CD4-positive, alpha-beta memory T cell (primary cell): ENCODE measurements at regions of chr6 and their contacts with region 1.

Region 1: GRCh38 chr6:158559895-158560835 is at the start of gene TMEM181:
- DNase-seq: peak; percentile 83 to 87 (median 87)
- H3K4me3 ChIP-seq: peak within 1 kb of the TSS; percentile 32 to 71
- H3K4me3 Mint-ChIP-seq: peak within 1 kb of the TSS; percentile 90 to 98 (median 96)
- H3K27ac ChIP-seq: peak within 1 kb of the TSS; percentile 81
- H3K27ac Mint-ChIP-seq: peak within 1 kb of the TSS; percentile 87 to 98 (median 95)
- H3K4me1 ChIP-seq: peaks cover 50% of the 10 kb centered on the region
- H3K4me1 Mint-ChIP-seq: peaks cover 30 to 50% (median 43%) of the 10 kb centered on the region in 4 donors
- H3K27me3 ChIP-seq: no peaks in the 10 kb centered on the region
- H3K27me3 Mint-ChIP-seq: no peaks in the 10 kb centered on the region
- total RNA-seq, gene TMEM181: 26.1 to 28.0 TPM

Region 2: GRCh38 chr6:158231551-158232315 is 328.4 kb before region 1 on chr6:
- CTCF ChIA-PET with region 1: no interaction called
- POLR2A ChIA-PET with region 1: no interaction called
- intact Hi-C with region 1: loop called (anchors 2 kb)
- DNase-seq: peak; percentile 70 to 77 (median 75)
- H3K4me3 ChIP-seq: peak overlapping the region; percentile 32 to 66
- H3K4me3 Mint-ChIP-seq: peak overlapping the region; percentile 86 to 93 (median 91)
- H3K27ac ChIP-seq: peak overlapping the region; percentile 52
- H3K27ac Mint-ChIP-seq: peak overlapping the region; percentile 84 to 97 (median 94)
- H3K4me1 ChIP-seq: peaks cover 28% of the 10 kb centered on the region
- H3K4me1 Mint-ChIP-seq: peaks cover 29 to 45% (median 35%) of the 10 kb centered on the region in 4 donors
- H3K27me3 ChIP-seq: no peaks in the 10 kb centered on the region
- H3K27me3 Mint-ChIP-seq: no peaks in the 10 kb centered on the region

Region 3: GRCh38 chr6:158468666-158469065 is 91.5 kb before region 1 on chr6:
- CTCF ChIA-PET with region 1: no interaction called
- POLR2A ChIA-PET with region 1: no interaction called
- intact Hi-C with region 1: no loop called
- DNase-seq: no peak
- H3K4me3 ChIP-seq: no peak overlapping the region
- H3K4me3 Mint-ChIP-seq: no peak overlapping the region
- H3K27ac ChIP-seq: no peak overlapping the region
- H3K27ac Mint-ChIP-seq: peak overlapping the region in 1 of 7 donors; percentile 42
- H3K4me1 ChIP-seq: no peaks in the 10 kb centered on the region
- H3K4me1 Mint-ChIP-seq: peaks cover 0 to 3% (median 0%) of the 10 kb centered on the region in 4 donors
- H3K27me3 ChIP-seq: no peaks in the 10 kb centered on the region
- H3K27me3 Mint-ChIP-seq: no peaks in the 10 kb centered on the region

Region 4: GRCh38 chr6:158518191-158519127 is 41.7 kb before region 1 on chr6:
- CTCF ChIA-PET with region 1: interaction called, 5 read pairs
- POLR2A ChIA-PET with region 1: interaction called, 4 read pairs
- intact Hi-C with region 1: loop called (anchors 5 kb)
- DNase-seq: peak; percentile 57 to 68 (median 64)
- H3K4me3 ChIP-seq: peak overlapping the region; percentile 20 to 51
- H3K4me3 Mint-ChIP-seq: peak overlapping the region; percentile 79 to 90 (median 86)
- H3K27ac ChIP-seq: no peak overlapping the region
- H3K27ac Mint-ChIP-seq: peak overlapping the region; percentile 62 to 93 (median 80)
- H3K4me1 ChIP-seq: peaks cover 33% of the 10 kb centered on the region
- H3K4me1 Mint-ChIP-seq: peaks cover 22 to 41% (median 31%) of the 10 kb centered on the region in 4 donors
- H3K27me3 ChIP-seq: no peaks in the 10 kb centered on the region
- H3K27me3 Mint-ChIP-seq: peaks cover 2 to 6% of the 10 kb centered on the region in 2 donors

Region 5: GRCh38 chr6:158536084-158536890 is 23.9 kb before region 1 on chr6:
- CTCF ChIA-PET with region 1: no interaction called
- POLR2A ChIA-PET with region 1: interaction called, 8 read pairs
- intact Hi-C with region 1: loop called (anchors 2 kb)
- DNase-seq: peak; percentile 72 to 76 (median 73)
- H3K4me3 ChIP-seq: peak overlapping the region in 1 of 2 donors; percentile 56
- H3K4me3 Mint-ChIP-seq: peak overlapping the region; percentile 76 to 88 (median 82)
- H3K27ac ChIP-seq: no peak overlapping the region
- H3K27ac Mint-ChIP-seq: no peak overlapping the region
- H3K4me1 ChIP-seq: peaks cover 11% of the 10 kb centered on the region
- H3K4me1 Mint-ChIP-seq: peaks cover 0 to 6% (median 3%) of the 10 kb centered on the region in 4 donors
- H3K27me3 ChIP-seq: no peaks in the 10 kb centered on the region
- H3K27me3 Mint-ChIP-seq: peaks cover 15 to 16% of the 10 kb centered on the region in 2 donors

Region 6: DNA sequence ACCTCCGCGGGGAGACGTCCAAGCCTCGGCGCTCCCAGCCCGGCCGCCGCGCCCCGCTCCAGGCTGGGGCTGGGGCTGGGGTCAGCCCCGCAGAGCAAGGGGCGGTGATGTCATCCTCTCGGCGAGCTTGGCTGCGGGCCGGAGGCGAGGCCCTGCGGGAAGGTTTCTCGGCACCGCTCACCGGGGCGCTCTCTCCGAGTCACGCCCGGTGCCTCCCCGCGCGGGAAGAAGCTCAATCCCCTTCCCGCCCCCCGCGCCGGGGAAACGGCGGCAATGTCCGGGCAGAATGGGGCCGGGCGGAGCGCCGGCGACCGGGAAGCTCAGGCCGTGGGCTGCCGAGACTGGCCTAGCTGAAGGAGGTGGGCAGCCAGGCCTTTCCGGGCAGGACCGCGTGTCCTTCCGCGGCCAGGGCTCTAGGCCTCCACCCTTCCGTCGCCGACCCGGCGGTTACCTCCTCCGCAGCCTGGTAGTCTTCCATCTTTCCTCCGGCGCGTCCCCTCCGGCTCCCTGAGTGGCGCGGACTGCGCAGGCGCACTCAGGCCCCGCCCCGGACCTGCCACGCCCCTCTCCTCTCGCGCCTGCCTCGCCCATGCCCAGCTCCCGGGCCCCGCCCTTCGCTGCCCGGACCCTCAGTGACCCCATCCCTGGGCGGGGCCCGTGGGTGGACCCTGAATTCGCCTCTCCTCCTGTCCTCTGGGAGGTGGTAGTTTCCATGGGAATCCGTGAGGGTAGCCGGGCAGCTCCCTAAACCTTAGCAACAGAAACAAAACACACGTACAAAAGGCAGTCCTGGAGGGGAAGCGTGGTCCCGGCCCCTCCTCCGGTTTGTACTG is 84.3 kb after region 1 on chr6 and contains the start of gene DYNLT1:
- CTCF ChIA-PET with region 1: no interaction called
- POLR2A ChIA-PET with region 1: interaction called, 13 read pairs
- intact Hi-C with region 1: loop called (anchors 5 kb)
- DNase-seq: peak; percentile 78 to 95 (median 88)
- H3K4me3 ChIP-seq: peak within 1 kb of the TSS; percentile 84 to 85
- H3K4me3 Mint-ChIP-seq: peak within 1 kb of the TSS; percentile 99 to 100 (median 99)
- H3K27ac ChIP-seq: peak within 1 kb of the TSS; percentile 96
- H3K27ac Mint-ChIP-seq: peak within 1 kb of the TSS; percentile 92 to 100 (median 99)
- H3K4me1 ChIP-seq: peaks cover 58% of the 10 kb centered on the region
- H3K4me1 Mint-ChIP-seq: peaks cover 46 to 82% (median 55%) of the 10 kb centered on the region in 4 donors
- H3K27me3 ChIP-seq: no peaks in the 10 kb centered on the region
- H3K27me3 Mint-ChIP-seq: no peaks in the 10 kb centered on the region
- total RNA-seq, gene DYNLT1: 78.8 to 90.4 TPM